ENCODE measurements at regions of chr10 and their contacts with region 1.

Region 1: DNA sequence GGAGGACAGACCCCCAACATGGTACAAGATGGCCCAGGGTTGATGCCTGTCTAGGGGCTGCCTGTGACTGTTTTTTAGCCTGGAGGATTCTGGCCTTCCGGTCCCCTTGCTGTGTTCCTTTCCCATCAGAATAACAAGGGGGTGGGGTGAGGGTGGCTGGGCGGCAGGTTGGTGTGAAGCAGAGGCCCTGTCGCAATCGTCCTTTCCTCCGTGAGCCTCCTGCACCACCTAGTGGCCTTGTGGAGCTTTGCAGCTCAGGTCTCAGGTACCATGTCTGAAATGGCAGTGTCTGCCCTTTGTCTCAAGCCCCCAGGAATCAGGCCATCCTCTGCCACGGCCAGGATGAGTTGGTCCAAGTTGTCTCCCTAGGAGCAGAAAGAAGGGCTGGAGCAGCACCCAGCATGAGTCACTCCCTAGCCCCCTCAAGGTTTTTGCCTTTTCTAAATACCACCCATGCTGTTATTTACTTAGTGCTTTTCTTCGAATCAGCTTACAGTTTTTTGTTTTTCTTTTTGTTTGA is 24.2 kb downstream of the TACR2 start:
- DNase-seq: peak; percentile 90
- H3K4me3 Mint-ChIP-seq: no peak overlapping the region
- H3K27ac Mint-ChIP-seq: no peak overlapping the region
- H3K4me1 Mint-ChIP-seq: peaks cover 16% of the 10 kb centered on the region
- H3K27me3 Mint-ChIP-seq: no peaks in the 10 kb centered on the region
- CTCF ChIP-seq: peak; percentile 97

Region 2: GRCh38 chr10:69237528-69238159 is 154.9 kb before region 1 on chr10:
- CTCF ChIA-PET with region 1: interaction called, 4 read pairs
- intact Hi-C with region 1: loop called (anchors 1 kb)
- DNase-seq: peak; percentile 89
- H3K4me3 Mint-ChIP-seq: no peak overlapping the region
- H3K27ac Mint-ChIP-seq: peak overlapping the region; percentile 6
- H3K4me1 Mint-ChIP-seq: peaks cover 12% of the 10 kb centered on the region
- H3K27me3 Mint-ChIP-seq: no peaks in the 10 kb centered on the region
- CTCF ChIP-seq: peak; percentile 90

Region 3: GRCh38 chr10:69262292-69262751 is 130.2 kb before region 1 on chr10:
- CTCF ChIA-PET with region 1: no interaction called
- intact Hi-C with region 1: loop called (anchors 10 kb)
- DNase-seq: no peak
- H3K4me3 Mint-ChIP-seq: no peak overlapping the region
- H3K27ac Mint-ChIP-seq: peak overlapping the region; percentile 28
- H3K4me1 Mint-ChIP-seq: no peaks in the 10 kb centered on the region
- H3K27me3 Mint-ChIP-seq: no peaks in the 10 kb centered on the region
- CTCF ChIP-seq: no peak

Region 4: GRCh38 chr10:69624245-69624786 is 231.8 kb after region 1 on chr10:
- CTCF ChIA-PET with region 1: no interaction called
- intact Hi-C with region 1: no loop called
- DNase-seq: no peak
- H3K4me3 Mint-ChIP-seq: no peak overlapping the region
- H3K27ac Mint-ChIP-seq: no peak overlapping the region
- H3K4me1 Mint-ChIP-seq: no peaks in the 10 kb centered on the region
- H3K27me3 Mint-ChIP-seq: peaks cover 38% of the 10 kb centered on the region
- CTCF ChIP-seq: no peak